Activated T-helper 1 cell treated with anti-CD3 and anti-CD28 coated beads, Interleukin-12 subunit alpha, Interleukin-12 subunit beta, Interleukin-2, Interleukin-4 antibody, amounts not matched to agents 30 ng/mL and 10 ng/mL and 1 ng/mL, durations not matched to agents 14 hours and 24 hours and 36 hours (primary cell): ENCODE measurements at regions of chr11 and their contacts with region 1.

Region 1: DNA sequence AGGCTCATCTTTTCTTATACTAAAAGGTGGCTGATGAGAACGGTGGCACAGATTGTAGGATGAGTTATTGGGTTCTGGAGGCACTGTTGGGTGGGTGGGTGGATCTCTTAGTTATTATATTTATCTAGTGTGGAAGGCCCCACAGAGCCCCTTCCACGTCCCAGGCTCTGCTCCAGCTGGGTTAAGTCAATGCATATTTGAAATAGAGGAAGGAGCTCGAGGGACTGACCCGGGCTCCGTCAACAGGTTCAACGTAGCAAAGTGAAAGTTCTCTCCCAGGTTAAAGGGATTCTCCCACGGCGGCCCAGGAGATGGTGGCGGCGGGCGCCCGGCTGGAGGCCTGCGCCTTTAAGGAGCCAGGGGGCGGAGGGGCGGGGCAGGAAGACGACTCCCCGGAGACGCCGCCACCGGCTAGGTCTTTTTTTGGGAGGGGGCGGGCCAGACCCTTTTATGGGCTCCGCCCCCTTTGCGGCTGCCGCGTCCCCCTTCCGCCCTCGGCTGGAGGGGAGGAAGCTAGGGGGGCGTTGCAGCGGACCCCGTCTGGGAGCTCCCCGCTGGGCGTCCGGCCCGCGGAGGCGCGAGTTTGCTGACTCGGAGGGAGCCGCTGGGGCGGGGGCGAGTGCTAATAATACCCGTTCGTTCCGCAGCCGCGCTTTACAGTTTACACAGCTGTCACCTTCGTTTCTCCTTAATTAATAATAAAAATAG is 1.5 kb upstream of the INPPL1 start:
- DNase-seq: peak; percentile 95
- H3K4me3 Mint-ChIP-seq: peak overlapping the region; percentile 85
- H3K27ac Mint-ChIP-seq: peak overlapping the region; percentile 83
- H3K4me1 Mint-ChIP-seq: peaks cover 20% of the 10 kb centered on the region
- H3K27me3 Mint-ChIP-seq: peaks cover 4% of the 10 kb centered on the region

Region 2: DNA sequence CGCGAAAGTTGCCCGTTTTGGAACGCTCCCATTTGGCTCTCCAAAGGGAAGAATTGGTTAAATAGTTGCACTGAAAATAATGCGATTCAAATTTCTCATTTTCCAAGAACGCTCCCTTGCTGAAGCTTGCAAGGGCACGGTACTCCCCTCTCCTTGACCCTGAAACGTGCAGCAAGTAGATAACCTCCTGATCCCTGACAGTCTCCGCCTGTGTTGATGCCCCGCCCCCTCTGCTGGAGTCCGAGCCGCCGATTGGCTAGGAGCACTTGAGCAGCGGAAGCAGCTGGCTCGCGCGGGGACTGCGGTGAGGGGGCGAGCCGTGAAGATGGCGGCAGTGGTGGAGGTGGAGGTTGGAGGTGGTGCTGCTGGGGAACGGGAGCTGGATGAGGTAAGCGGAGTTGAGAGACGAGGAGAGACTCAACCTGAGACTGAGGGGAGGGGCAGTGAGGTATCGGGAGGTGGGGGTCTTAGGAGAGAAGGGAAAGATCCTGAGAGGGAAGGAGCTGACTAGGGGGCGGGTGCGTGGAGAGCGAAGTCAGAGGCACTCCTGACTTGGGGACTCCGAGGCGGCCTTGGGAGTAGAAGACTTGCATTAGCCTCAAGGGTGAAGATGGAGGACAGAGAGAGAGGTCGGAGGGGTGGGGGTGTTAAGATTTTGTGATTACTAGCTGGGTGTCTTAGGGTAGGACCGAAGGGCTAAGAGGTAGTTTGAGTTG is 294.2 kb before region 1 on chr11 and contains the start of gene RNF121:
- intact Hi-C with region 1: loop called (anchors 1 kb)
- DNase-seq: peak; percentile 96
- H3K4me3 Mint-ChIP-seq: peak within 1 kb of the TSS; percentile 98
- H3K27ac Mint-ChIP-seq: peak within 1 kb of the TSS; percentile 95
- H3K4me1 Mint-ChIP-seq: peaks cover 51% of the 10 kb centered on the region
- H3K27me3 Mint-ChIP-seq: no peaks in the 10 kb centered on the region
- total RNA-seq, gene RNF121: 65.8 and 70.3 TPM in 2 replicates

Region 3: DNA sequence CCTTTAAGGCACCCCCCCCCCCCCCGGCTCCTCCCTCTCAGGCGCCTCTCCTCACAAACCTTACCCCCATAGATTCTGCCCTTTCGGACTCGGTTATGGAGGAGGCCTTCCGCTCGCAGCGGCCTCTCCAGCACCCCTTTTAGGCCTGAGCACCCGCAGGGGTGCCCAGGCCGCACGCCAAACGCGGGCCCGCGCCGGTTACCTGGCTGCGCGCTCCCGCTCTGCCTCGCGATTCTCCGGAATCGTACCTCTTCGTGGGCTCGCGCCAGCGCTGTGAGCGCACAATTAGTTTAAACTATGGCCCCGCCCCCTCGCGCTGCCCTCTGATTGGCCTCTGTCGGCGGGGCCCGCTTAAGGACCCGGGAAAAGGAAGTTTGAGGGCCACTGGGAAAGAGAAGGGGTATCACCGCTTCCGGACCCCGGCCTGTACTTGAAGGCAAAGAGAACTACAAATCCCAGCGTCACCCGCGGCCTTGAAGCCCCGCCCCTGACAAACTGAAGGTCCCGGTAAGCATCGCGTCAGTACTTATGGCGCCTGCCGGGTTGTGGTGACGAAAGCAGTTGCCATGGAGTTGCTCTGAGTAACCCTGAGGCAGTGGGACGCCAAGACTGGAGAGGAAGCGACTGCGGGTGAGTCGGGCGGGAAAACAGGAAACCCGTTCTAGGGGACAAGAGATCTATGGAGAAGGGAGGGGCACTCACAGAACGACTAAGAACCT is 142.6 kb before region 1 on chr11 and contains the starts of genes LRRC51 and NUMA1:
- intact Hi-C with region 1: loop called (anchors 1 kb)
- DNase-seq: peak; percentile 99
- H3K4me3 Mint-ChIP-seq: peak within 1 kb of the TSS; percentile 95
- H3K27ac Mint-ChIP-seq: peak within 1 kb of the TSS; percentile 93
- H3K4me1 Mint-ChIP-seq: peaks cover 49% of the 10 kb centered on the region
- H3K27me3 Mint-ChIP-seq: no peaks in the 10 kb centered on the region
- total RNA-seq, gene LRRC51: 5.7 and 8.2 TPM in 2 replicates
- total RNA-seq, gene NUMA1: 141 and 150 TPM in 2 replicates

Region 4: GRCh38 chr11:72112321-72113219 is 110.5 kb before region 1 on chr11 and contains the start of gene ANAPC15:
- intact Hi-C with region 1: loop called (anchors 1 kb)
- DNase-seq: peak; percentile 97
- H3K4me3 Mint-ChIP-seq: peak within 1 kb of the TSS; percentile 90
- H3K27ac Mint-ChIP-seq: peak within 1 kb of the TSS; percentile 98
- H3K4me1 Mint-ChIP-seq: peaks cover 28% of the 10 kb centered on the region
- H3K27me3 Mint-ChIP-seq: no peaks in the 10 kb centered on the region
- total RNA-seq, gene ANAPC15: 49.4 and 51.9 TPM in 2 replicates

Region 5: DNA sequence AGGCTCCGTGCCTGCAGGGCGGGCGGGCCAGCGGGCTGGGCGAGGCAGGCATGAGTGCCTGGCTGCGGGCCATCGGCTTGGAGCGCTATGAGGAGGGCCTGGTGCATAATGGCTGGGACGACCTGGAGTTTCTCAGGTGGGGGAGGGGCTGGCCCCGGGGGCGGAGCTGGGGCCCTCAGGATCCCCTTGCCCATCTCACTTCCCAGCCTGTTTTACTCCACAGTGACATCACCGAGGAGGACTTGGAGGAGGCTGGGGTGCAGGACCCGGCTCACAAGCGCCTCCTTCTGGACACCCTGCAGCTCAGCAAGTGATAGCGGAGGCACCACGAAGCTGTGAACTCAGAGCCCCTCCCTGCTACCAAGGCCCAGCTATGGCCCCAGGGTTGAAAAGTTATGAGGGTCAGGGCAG is 15.0 kb after region 1 on chr11:
- intact Hi-C with region 1: loop called (anchors 2 kb)
- DNase-seq: no peak
- H3K4me3 Mint-ChIP-seq: no peak overlapping the region
- H3K27ac Mint-ChIP-seq: no peak overlapping the region
- H3K4me1 Mint-ChIP-seq: peaks cover 10% of the 10 kb centered on the region
- H3K27me3 Mint-ChIP-seq: peaks cover 37% of the 10 kb centered on the region

Region 6: GRCh38 chr11:72250661-72251465 is 27.8 kb after region 1 on chr11:
- intact Hi-C with region 1: no loop called
- DNase-seq: no peak
- H3K4me3 Mint-ChIP-seq: no peak overlapping the region
- H3K27ac Mint-ChIP-seq: no peak overlapping the region
- H3K4me1 Mint-ChIP-seq: no peaks in the 10 kb centered on the region
- H3K27me3 Mint-ChIP-seq: peaks cover 29% of the 10 kb centered on the region

Region 7: DNA sequence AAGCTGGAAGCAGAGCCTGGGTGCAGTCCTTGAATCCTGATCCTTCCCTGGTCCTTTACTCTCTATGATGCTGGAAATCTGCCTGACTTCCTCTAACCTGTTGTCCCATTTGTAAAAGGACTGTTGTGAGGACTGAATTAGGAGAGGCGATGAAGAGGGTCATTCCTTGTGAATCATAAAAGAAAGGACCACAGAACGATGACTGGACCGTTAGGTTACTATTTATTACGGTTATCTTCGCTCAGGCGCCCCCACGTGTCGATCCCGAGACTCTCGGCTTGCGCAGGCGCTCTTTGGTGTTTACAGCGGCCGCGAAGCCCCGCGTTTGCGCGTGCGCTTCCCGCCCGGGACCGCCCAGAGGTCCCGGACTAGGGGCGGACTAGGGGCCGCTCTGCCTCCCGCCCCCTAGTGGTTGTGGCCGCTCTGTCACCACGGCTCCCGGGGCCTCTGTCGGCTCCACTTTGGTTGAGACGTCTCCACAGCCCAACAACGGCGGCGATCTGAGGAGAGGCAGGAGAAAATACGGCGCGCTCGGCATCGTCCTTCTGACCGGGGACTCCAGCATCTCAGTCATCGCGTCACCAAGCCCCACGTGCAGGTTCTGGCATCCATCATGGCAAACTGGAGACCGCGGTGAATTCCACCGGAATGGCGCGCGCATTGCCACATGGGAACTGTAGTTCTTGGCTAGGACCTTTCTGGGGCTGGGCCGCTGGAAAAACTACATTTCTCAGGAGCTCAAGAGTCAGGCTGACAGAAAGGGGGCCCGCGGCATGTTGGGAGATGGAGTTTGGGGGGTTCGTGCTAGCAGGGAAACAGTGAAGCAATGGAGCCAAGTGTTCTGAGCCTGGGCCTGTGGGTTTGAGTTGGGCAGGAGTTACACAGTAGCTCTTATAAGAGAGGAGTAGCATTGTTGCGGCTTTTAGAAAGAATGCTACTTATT is 570.6 kb after region 1 on chr11 and contains the start of gene STARD10:
- intact Hi-C with region 1: loop called (anchors 5 kb)
- DNase-seq: peak; percentile 93
- H3K4me3 Mint-ChIP-seq: peak within 1 kb of the TSS; percentile 93
- H3K27ac Mint-ChIP-seq: peak within 1 kb of the TSS; percentile 99
- H3K4me1 Mint-ChIP-seq: peaks cover 35% of the 10 kb centered on the region
- H3K27me3 Mint-ChIP-seq: no peaks in the 10 kb centered on the region
- total RNA-seq, gene STARD10: 19.8 and 23.9 TPM in 2 replicates

Region 8: DNA sequence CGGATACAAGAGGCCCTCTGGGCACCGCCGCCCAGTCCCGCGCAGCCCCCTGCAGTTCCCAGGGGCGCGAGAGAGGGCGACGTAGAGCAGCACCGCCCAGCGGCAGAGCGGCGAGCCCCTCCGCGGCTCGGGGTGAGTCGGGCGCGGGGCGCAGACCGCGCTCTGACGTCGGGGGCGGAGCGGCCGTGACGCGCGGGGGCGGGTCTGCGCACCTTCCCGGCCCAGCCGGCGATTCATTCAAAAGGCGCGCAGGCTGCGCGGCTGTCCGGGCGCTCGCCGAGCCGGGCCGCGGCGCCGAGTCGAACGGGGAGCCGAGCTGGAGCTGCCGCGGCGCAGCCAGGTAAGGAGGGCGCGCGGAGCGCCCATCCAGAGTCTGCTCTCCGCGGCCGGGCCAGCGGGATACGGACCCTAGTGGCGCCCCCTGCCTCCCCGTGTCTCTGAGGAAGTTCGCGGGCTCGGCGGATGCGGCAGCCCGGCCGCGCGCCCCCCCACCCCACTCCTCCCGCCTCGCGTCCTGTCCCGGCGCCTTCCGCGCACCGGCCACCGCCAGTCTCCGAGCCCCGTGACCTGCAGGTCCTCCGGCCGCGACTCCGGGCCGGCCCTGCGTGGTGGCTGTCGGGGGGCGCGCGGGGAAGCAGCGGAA is 1153.2 kb after region 1 on chr11 and contains the start of gene RELT:
- intact Hi-C with region 1: loop called (anchors 10 kb)
- DNase-seq: peak; percentile 94
- H3K4me3 Mint-ChIP-seq: peak within 1 kb of the TSS; percentile 91
- H3K27ac Mint-ChIP-seq: peak within 1 kb of the TSS; percentile 90
- H3K4me1 Mint-ChIP-seq: peaks cover 28% of the 10 kb centered on the region
- H3K27me3 Mint-ChIP-seq: no peaks in the 10 kb centered on the region
- total RNA-seq, gene RELT: 34.6 and 37.6 TPM in 2 replicates